ENCODE measurements at regions of chr14 and their contacts with region 1.

Region 1: GRCh38 chr14:80850197-80850814 is 91.2 kb downstream of the CEP128 start:
- DNase-seq: no peak
- H3K4me3 ChIP-seq: no peak overlapping the region
- H3K27ac ChIP-seq: no peak overlapping the region
- H3K4me1 ChIP-seq: no peaks in the 10 kb centered on the region
- H3K27me3 ChIP-seq: no peaks in the 10 kb centered on the region
- CTCF ChIP-seq: peak; percentile 54 to 62 (median 58)
- EP300 ChIP-seq: no peak
- POLR2A ChIP-seq: no peak

Region 2: DNA sequence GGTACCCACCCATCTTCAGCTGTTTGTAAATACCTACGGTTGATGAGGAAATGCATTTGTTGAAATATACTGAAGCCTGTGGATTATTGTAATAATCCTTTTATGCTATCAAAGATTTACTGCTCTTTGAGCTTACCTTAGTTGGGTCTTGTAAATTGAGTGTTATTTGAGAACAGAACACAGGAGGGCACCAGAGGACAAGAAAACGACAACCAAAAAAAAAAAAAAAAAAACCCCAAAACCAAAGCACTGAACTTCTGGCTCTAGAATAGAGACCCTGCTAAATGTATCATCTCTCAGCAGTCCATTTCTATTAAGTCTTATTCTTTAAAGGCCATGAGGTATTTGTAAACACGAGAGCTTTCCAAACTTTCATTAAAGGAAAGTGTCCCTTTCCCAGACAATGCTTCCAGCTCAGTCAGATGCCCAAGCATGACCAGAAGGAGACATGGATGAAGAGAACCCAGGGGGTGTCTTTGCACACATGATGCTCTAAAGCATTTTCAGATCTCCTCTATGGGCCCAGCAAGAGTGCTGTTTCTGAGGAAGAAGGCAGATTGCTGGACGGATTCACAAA is 1916.3 kb before region 1 on chr14:
- in situ Hi-C with region 1: loop called in 1 of 4 experiments (anchors 25 kb)
- intact Hi-C with region 1: loop called (anchors 10 kb)
- DNase-seq: no peak
- H3K4me3 ChIP-seq: no peak overlapping the region
- H3K27ac ChIP-seq: no peak overlapping the region
- H3K4me1 ChIP-seq: no peaks in the 10 kb centered on the region
- H3K27me3 ChIP-seq: no peaks in the 10 kb centered on the region
- CTCF ChIP-seq: peak in 4 of 5 experiments; percentile 23 to 37 (median 30)
- EP300 ChIP-seq: no peak
- POLR2A ChIP-seq: no peak

Region 3: DNA sequence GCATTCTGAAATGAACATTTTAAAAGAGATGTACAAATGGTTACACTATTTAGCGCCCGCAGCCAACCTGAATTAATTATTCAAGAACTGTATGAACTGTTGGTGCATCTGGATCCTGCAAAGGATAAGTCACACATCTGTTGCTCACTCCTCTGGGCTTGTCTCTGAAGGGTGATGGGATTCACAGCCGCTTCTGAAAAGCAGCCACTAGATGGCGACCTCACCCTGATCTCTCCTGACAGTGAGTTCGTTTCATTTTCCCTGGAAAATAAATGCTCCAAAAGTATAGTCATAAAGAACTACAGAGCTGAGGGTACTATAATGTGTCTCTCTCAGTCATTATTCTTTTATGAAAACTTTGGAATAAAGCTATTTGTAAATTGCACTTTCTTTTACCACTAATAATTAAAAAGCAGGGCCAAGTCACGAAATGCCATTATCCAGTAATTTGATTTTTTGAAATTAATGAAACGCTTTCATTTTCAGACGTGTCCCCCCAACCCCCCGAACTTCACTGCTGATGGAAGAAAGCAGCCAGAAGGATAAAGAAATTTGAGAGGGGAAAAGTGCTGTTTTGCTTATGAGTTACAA is 1890.5 kb before region 1 on chr14:
- in situ Hi-C with region 1: loop called in 1 of 4 experiments (anchors 25 kb)
- intact Hi-C with region 1: no loop called
- DNase-seq: peak; percentile 64
- H3K4me3 ChIP-seq: peak overlapping the region in 1 of 4 donors; percentile 13
- H3K27ac ChIP-seq: no peak overlapping the region
- H3K4me1 ChIP-seq: peaks cover 0 to 5% (median 1%) of the 10 kb centered on the region in 4 donors
- H3K27me3 ChIP-seq: no peaks in the 10 kb centered on the region
- CTCF ChIP-seq: peak; percentile 47 to 82 (median 75)
- EP300 ChIP-seq: no peak
- POLR2A ChIP-seq: no peak

Measured in transverse colon (tissue), 4 donors.